Vagina (tissue), 2 donors: ENCODE measurements at regions of chr7 and their contacts with region 1.

Region 1: DNA sequence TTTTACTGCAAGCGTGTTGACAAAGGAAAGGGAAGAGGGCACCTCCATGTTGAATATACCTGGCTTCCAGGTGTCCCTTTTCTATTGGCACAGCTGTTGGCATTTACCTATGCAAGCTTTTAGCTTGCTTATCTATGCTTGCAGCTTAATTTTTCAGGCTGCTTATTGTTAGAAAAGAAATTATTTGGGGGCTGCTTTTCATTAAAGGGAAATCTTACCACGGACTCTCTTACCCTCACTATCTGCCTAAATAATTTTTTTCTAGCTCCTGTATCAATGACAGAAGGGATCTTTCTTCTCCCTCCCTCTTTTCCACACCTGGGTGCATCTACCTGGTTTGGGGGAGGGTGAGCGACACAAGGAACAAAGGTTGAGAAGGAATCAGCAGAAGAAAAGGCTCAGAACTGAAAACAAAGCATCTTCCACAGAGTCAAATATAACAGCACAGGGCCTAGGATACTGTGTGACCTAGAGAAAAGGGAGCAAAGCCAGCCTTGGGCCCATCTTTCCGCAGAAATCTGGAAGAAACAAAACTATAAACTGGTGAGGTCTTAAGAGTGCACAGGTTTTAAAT is 15.2 kb upstream of the GJC3 start:
- DNase-seq: no peak
- H3K4me3 ChIP-seq: no peak overlapping the region
- H3K27ac ChIP-seq: no peak overlapping the region
- H3K4me1 ChIP-seq: no peaks in the 10 kb centered on the region
- H3K27me3 ChIP-seq: no peaks in the 10 kb centered on the region
- CTCF ChIP-seq: no peak
- POLR2A ChIP-seq: no peak

Region 2: GRCh38 chr7:99910976-99911375 is 33.6 kb before region 1 on chr7:
- intact Hi-C with region 1: loop called (anchors 1 kb)
- DNase-seq: no peak
- H3K4me3 ChIP-seq: no peak overlapping the region
- H3K27ac ChIP-seq: no peak overlapping the region
- H3K4me1 ChIP-seq: peaks cover 9% of the 10 kb centered on the region
- H3K27me3 ChIP-seq: no peaks in the 10 kb centered on the region
- CTCF ChIP-seq: no peak
- POLR2A ChIP-seq: no peak